T-cell (primary cell): ENCODE measurements at regions of chr12 and their contacts with region 1.

Region 1: GRCh38 chr12:55996715-55997534 is at the start of gene SUOX:
- DNase-seq: peak in 16 of 35 experiments; percentile 7 to 63 (median 26)
- ATAC-seq: peak; percentile 25 to 60 (median 36)
- H3K4me3 ChIP-seq: peak within 1 kb of the TSS in 1 of 2 donors; percentile 49
- H3K4me3 Mint-ChIP-seq: peak within 1 kb of the TSS; percentile 46 to 66 (median 56)
- H3K27ac ChIP-seq: no peak within 1 kb of the TSS
- H3K27ac Mint-ChIP-seq: peak within 1 kb of the TSS; percentile 23 to 34
- H3K4me1 ChIP-seq: peaks cover 0 to 16% of the 10 kb centered on the region in 2 experiments
- H3K4me1 Mint-ChIP-seq: peaks cover 21 to 24% (median 22%) of the 10 kb centered on the region in 3 donors
- H3K27me3 ChIP-seq: peaks cover 0 to 22% of the 10 kb centered on the region in 2 experiments
- H3K27me3 Mint-ChIP-seq: peaks cover 0 to 9% of the 10 kb centered on the region in 2 donors
- total RNA-seq, gene SUOX: 2.6 to 7.3 (median 3.2) TPM

Region 2: DNA sequence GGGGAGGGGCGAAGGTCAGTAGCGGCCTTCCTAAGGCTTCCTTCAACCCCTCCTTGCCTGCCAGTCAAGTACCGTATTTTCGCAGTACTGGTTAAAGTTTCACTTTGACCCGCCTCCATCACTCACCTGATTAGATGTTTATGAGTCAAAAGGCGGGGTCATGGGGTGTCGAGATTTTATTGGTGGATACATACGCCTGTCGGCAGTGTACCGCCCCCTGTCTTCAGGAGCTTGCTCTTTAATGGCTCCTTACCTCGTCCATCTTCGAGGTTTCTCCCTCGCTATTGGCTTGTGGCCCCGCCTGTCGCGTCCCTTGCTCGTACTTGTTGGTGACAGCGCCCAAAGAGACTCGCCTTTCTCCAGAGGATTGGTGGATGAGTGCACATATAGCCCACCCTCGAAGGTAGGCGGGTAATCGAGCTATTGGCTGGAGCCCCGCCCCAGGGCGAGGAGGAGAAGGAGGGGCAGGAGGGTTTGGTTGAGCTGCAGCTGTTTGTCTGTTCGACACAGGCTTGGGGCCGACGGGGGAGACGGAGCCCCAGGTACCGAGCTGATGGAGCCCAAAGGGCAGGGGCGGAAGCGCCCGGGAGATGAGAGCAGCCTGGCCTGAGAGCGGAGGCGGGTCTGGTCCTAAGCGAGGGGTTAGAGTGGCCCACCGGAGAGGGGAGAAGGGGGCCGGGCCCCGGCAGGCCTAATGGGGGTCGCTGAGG is 23.2 kb before region 1 on chr12 and contains the start of gene RAB5B:
- CTCF ChIA-PET with region 1: interaction called in 1 of 2 experiments, 26 read pairs
- POLR2A ChIA-PET with region 1: interaction called in 1 of 2 experiments, 6 read pairs
- DNase-seq: peak; percentile 92 to 100 (median 99)
- ATAC-seq: peak; percentile 91 to 93 (median 92)
- H3K4me3 ChIP-seq: peak within 1 kb of the TSS; percentile 69 to 89
- H3K4me3 Mint-ChIP-seq: no peak within 1 kb of the TSS
- H3K27ac ChIP-seq: peak within 1 kb of the TSS; percentile 70
- H3K27ac Mint-ChIP-seq: no peak within 1 kb of the TSS
- H3K4me1 ChIP-seq: peaks cover 18 to 21% of the 10 kb centered on the region in 2 experiments
- H3K4me1 Mint-ChIP-seq: peaks cover 22 to 27% (median 24%) of the 10 kb centered on the region in 3 donors
- H3K27me3 ChIP-seq: no peaks in the 10 kb centered on the region
- H3K27me3 Mint-ChIP-seq: no peaks in the 10 kb centered on the region
- total RNA-seq, gene RAB5B: 58.6 to 99.8 (median 85.7) TPM

Region 3: GRCh38 chr12:56029666-56030293 is 32.9 kb after region 1 on chr12:
- CTCF ChIA-PET with region 1: interaction called, 15 read pairs
- POLR2A ChIA-PET with region 1: interaction called, 5 to 6 read pairs
- DNase-seq: peak in 23 of 35 experiments; percentile 7 to 67 (median 33)
- ATAC-seq: peak; percentile 36 to 56 (median 44)
- H3K4me3 ChIP-seq: no peak overlapping the region
- H3K4me3 Mint-ChIP-seq: no peak overlapping the region
- H3K27ac ChIP-seq: no peak overlapping the region
- H3K27ac Mint-ChIP-seq: peak overlapping the region in 1 of 2 donors; percentile 5
- H3K4me1 ChIP-seq: peaks cover 19 to 21% of the 10 kb centered on the region in 2 experiments
- H3K4me1 Mint-ChIP-seq: peaks cover 28 to 32% (median 31%) of the 10 kb centered on the region in 3 donors
- H3K27me3 ChIP-seq: no peaks in the 10 kb centered on the region
- H3K27me3 Mint-ChIP-seq: no peaks in the 10 kb centered on the region

Region 4: GRCh38 chr12:56041552-56042429 is 44.9 kb after region 1 on chr12 and contains the start of gene RPS26:
- CTCF ChIA-PET with region 1: interaction called, 9 to 13 read pairs
- POLR2A ChIA-PET with region 1: no interaction called
- DNase-seq: peak; percentile 80 to 98 (median 92)
- ATAC-seq: peak; percentile 90 to 94 (median 92)
- H3K4me3 ChIP-seq: peak within 1 kb of the TSS; percentile 74 to 89
- H3K4me3 Mint-ChIP-seq: peak within 1 kb of the TSS; percentile 91 to 99 (median 99)
- H3K27ac ChIP-seq: peak within 1 kb of the TSS; percentile 71
- H3K27ac Mint-ChIP-seq: peak within 1 kb of the TSS; percentile 98 to 99
- H3K4me1 ChIP-seq: peaks cover 23 to 33% of the 10 kb centered on the region in 2 experiments
- H3K4me1 Mint-ChIP-seq: peaks cover 32 to 52% (median 40%) of the 10 kb centered on the region in 3 donors
- H3K27me3 ChIP-seq: no peaks in the 10 kb centered on the region
- H3K27me3 Mint-ChIP-seq: no peaks in the 10 kb centered on the region
- total RNA-seq, gene RPS26: 30.3 to 141 (median 49.9) TPM